GM10248 (cell line): ENCODE measurements at regions of chr14 and their contacts with region 1.

Region 1: GRCh38 chr14:24215495-24216344 is at the start of gene MDP1:
- DNase-seq: peak; percentile 91
- CTCF ChIP-seq: peak; percentile 97

Region 2: DNA sequence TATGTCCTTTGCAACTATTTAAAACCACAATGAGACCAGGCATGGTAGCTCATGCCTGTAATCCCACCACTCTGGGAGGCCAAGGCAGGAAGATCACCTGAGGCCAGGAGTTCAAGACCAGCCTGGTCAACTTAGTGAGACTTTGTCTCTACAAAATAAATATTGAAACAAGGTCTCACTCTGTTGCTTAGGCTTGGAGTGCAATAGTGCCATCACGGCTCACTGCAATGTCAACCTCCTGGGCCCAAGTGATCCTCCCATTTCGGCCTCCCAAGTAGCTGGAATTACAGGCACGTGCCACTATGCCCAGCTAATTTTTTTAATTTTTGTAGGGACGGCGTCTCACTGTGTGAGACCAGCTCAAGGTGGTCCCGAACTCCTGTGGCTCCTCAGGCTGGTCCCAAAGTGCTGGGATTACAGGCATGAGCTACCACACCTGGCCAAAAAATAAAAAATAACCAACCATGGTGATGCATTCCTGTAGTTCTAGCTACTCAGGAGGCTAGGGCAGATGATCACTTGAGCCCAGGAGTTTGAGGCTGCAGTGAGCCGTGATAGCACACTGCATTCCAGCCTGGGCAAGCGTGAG is 86.2 kb before region 1 on chr14:
- CTCF ChIA-PET with region 1: no interaction called
- POLR2A ChIA-PET with region 1: no interaction called
- DNase-seq: no peak
- CTCF ChIP-seq: no peak

Region 3: DNA sequence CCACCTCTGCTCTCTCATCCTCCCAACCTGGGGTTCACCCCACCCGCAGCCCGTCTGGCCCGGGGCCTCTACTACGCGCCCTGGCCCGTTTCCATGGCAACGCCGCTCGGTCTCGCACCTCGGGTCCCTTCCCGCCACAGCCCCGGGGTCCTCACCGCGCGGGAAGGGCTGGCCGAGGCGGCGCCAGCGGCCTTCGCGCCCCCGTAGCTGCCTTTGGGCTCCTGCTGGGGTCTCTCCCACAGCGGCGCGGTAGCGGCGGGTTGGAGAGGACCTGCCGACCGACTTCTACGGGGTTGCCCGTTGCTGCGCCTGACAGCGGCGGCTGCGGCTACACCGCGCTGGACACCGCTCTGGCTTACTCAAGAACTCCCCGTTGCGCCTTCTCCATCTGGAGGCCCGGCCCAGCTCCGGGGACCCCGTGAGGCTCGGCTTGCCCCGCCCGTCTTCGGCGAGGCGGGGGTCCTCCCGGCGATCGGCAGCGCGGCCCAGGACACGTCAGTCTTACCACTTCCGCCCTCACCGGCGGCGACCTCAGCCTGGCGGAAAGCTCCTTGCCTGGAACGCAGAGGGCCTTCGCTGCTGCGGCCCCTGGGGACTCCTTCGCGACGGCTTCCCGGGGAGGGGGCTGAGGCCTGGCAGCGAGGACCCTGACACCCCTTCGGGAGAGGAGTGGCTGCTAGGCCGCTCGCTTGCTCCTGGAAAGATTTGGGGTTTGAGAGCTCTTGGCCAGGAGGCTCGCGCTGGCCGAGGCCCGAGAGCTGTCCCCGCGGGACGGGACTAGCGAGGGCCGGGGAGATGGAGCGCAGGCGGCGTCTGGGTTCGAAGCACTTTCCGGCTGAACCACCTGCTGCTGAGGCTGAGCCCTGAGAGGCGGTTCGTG is 20.3 kb before region 1 on chr14 and contains the start of gene TM9SF1:
- CTCF ChIA-PET with region 1: interaction called, 12 read pairs
- POLR2A ChIA-PET with region 1: interaction called, 14 read pairs
- DNase-seq: peak; percentile 94
- CTCF ChIP-seq: no peak

Region 4: GRCh38 chr14:24232121-24232644 is 16.5 kb after region 1 on chr14 and contains the start of gene NEDD8:
- CTCF ChIA-PET with region 1: interaction called, 20 read pairs
- POLR2A ChIA-PET with region 1: interaction called, 4 read pairs
- DNase-seq: peak; percentile 89
- CTCF ChIP-seq: no peak

Region 5: GRCh38 chr14:24251880-24252288 is 36.2 kb after region 1 on chr14:
- CTCF ChIA-PET with region 1: interaction called, 11 read pairs
- POLR2A ChIA-PET with region 1: interaction called, 4 read pairs
- DNase-seq: no peak
- CTCF ChIP-seq: no peak

Region 6: DNA sequence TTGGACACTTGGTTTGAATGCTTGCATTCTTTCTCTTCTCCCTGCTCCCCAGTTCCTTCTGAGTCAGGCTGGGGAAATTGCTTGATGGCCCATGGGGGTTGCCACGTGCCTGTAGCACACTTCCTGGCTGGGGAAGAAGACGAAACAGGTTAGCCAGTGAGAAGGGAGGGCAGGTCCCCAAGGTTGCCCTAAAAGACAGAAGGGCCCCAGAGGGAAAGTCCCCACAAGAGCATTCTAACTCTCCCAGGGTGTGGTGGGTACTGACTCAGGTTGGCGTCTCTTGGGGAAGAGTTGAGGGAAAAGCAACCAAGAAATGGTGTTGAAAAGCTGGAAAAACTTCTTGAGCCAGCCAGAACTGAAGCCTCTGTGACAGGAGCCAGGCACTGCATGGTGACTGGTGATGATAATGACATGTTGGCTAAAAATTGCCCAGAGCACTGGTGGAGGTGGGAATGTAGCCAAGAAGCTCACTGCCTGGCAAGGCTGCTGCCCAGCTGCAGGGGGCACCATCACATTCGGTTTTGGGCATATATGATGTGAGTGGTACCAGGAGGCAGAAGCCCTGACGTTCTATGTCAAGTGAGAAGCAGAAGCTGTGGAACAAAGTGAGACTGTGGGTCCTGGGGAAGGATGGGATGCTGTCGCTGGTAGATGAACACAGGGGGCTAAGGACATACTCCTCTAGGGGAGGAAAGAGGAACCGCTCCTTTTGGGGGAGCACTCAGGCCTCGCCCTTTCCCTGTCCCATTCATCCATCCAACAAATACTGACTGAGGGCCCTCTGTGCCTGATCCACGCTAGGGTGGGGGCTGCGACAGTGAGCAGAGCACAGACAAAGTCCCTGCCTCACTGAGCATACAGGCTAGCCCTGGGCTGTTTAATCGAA is 63.8 kb after region 1 on chr14:
- CTCF ChIA-PET with region 1: interaction called, 10 read pairs
- POLR2A ChIA-PET with region 1: no interaction called
- DNase-seq: peak; percentile 50
- CTCF ChIP-seq: peak; percentile 11

Region 7: DNA sequence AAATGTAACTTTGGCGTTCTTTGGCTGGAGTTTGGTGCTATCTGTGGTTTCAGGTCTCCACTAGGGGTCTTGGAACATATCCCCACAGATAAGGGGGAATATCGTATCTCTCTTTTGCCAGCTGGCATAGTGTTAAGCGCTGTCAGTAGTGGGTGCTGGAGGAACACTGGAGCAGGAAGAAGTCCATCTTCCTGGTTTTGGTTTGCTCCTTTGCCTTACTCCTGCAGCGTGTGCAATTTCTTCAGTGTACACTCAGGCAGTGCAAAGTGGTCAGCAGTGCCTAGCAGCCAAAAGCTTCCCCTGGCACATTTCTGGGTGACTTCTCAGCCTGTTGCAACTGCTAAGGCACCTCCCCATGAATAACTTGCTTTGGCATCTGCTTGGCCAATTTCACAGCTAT is 135.8 kb after region 1 on chr14:
- CTCF ChIA-PET with region 1: no interaction called
- POLR2A ChIA-PET with region 1: no interaction called
- DNase-seq: no peak
- CTCF ChIP-seq: no peak

Region 8: DNA sequence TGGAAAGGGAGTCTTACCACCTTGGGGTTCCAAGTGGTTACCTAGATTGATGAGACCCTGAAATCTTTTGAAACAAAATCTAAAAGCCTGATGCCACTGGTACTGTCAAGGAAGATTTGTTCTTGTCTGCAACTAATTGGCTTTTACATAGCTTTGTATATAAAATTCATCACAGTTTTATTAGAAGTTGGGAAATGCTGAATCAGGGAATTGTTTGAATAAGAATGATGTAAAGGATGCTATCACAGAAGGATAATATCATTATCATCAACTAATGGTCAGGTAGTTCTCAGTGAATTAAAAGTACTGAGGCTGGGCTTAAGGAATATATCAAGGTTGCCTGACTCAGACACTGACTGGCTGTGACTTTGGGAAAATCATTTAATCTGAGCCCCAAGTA is 1082.5 kb after region 1 on chr14:
- CTCF ChIA-PET with region 1: no interaction called
- POLR2A ChIA-PET with region 1: no interaction called
- DNase-seq: no peak
- CTCF ChIP-seq: no peak